ENCODE measurements at regions of chr17 and their contacts with region 1.

Region 1: DNA sequence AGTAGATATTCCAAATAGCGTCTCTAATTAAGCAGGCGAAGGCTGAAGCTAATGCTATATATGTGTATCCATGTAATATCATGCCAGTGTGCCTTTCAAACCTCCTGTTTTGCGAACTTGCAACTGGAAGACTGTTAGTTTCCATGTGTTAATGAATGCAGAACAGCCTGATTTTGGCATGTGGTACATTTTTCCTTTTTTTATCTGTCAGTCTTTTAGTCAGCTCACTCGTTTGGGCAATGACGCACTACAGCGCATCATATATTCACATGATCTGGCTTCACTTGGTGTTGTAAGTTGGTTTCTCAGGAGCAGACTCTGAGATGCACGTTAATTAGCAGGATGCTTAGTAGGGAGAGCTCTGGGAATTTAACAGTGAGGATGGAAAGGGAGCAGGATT is 210.4 kb upstream of the CA10 start:
- DNase-seq: no peak
- ATAC-seq: no peak
- H3K4me3 ChIP-seq: no peak overlapping the region
- H3K4me3 Mint-ChIP-seq: no peak overlapping the region
- H3K27ac ChIP-seq: no peak overlapping the region
- H3K27ac Mint-ChIP-seq: no peak overlapping the region
- H3K4me1 ChIP-seq: no peaks in the 10 kb centered on the region
- H3K4me1 Mint-ChIP-seq: no peaks in the 10 kb centered on the region
- H3K27me3 ChIP-seq: no peaks in the 10 kb centered on the region
- H3K27me3 Mint-ChIP-seq: peaks cover 0 to 9% (median 0%) of the 10 kb centered on the region in 5 donors

Region 2: GRCh38 chr17:52420555-52421078 is 51.7 kb after region 1 on chr17:
- CTCF ChIA-PET with region 1: no interaction called
- POLR2A ChIA-PET with region 1: no interaction called
- intact Hi-C with region 1: loop called in 1 of 2 experiments (anchors 10 kb)
- DNase-seq: no peak
- ATAC-seq: no peak
- H3K4me3 ChIP-seq: no peak overlapping the region
- H3K4me3 Mint-ChIP-seq: no peak overlapping the region
- H3K27ac ChIP-seq: no peak overlapping the region
- H3K27ac Mint-ChIP-seq: no peak overlapping the region
- H3K4me1 ChIP-seq: no peaks in the 10 kb centered on the region
- H3K4me1 Mint-ChIP-seq: no peaks in the 10 kb centered on the region
- H3K27me3 ChIP-seq: no peaks in the 10 kb centered on the region
- H3K27me3 Mint-ChIP-seq: no peaks in the 10 kb centered on the region

Region 3: GRCh38 chr17:52442350-52442749 is 73.5 kb after region 1 on chr17:
- CTCF ChIA-PET with region 1: no interaction called
- POLR2A ChIA-PET with region 1: no interaction called
- intact Hi-C with region 1: no loop called
- DNase-seq: no peak
- ATAC-seq: no peak
- H3K4me3 ChIP-seq: no peak overlapping the region
- H3K4me3 Mint-ChIP-seq: no peak overlapping the region
- H3K27ac ChIP-seq: no peak overlapping the region
- H3K27ac Mint-ChIP-seq: no peak overlapping the region
- H3K4me1 ChIP-seq: no peaks in the 10 kb centered on the region
- H3K4me1 Mint-ChIP-seq: no peaks in the 10 kb centered on the region
- H3K27me3 ChIP-seq: no peaks in the 10 kb centered on the region
- H3K27me3 Mint-ChIP-seq: peaks cover 0 to 12% (median 0%) of the 10 kb centered on the region in 5 donors